Heart left ventricle (tissue), 16 donors: ENCODE measurements at regions of chr15 and their contacts with region 1.

Region 1: DNA sequence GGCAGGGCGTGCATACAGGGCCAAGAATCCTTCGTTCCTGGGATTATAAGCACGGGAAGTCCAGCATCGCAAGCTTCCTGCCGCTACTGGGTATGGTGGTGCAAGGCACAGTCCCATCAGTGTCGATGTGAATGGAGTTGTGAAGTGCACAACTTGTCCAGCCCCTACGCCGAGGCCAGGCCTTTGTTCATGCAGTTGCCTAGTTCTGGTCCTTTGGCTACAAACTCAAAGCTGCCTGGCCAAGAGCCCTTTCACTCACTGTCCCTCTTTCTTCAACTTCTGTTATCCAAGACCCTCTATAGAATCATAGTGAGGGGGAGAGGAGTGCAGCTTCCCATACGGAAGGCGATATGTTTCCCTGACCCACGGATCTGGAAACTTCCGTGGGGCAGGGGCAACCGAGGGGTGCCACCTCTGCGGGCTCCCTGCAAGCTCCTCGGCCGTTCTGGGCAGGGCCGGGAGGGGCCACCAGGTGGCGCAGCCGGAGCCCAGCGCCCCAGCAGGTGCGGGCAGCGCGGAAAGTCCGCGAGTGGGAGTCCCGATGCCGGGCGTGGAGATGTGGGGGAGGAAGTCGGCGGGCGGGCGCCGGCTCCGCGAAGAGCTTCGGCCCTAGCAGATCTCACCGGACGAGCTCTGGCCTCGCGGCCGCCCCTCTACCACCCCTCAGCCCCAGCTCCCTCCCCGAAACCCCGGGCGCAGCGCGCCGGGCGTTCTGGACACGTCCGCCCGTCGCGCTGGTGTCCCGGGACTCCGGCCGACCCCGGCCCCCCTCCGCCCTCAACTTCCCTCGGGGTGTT is 693 bp downstream of the RASGRP1 start:
- DNase-seq: peak; percentile 49 to 86 (median 67)
- ATAC-seq: peak in 3 of 4 donors; percentile 85 to 95 (median 89)
- H3K4me3 ChIP-seq: peak overlapping the region; percentile 37 to 70 (median 56)
- H3K27ac ChIP-seq: peak overlapping the region in 3 of 12 donors; percentile 25 to 83 (median 26)
- H3K4me1 ChIP-seq: peaks cover 0 to 20% (median 5%) of the 10 kb centered on the region in 12 donors
- H3K27me3 ChIP-seq: peaks cover 0 to 25% (median 5%) of the 10 kb centered on the region in 9 donors
- CTCF ChIP-seq: peak; percentile 80 to 91 (median 86)
- POLR2A ChIP-seq: no peak

Region 2: GRCh38 chr15:38474155-38474757 is 89.7 kb before region 1 on chr15:
- intact Hi-C with region 1: loop called in 2 of 10 experiments (anchors 5 to 10 kb)
- DNase-seq: no peak
- ATAC-seq: peak; percentile 61 to 96 (median 88)
- H3K4me3 ChIP-seq: no peak overlapping the region
- H3K27ac ChIP-seq: no peak overlapping the region
- H3K4me1 ChIP-seq: peaks cover 0 to 4% (median 0%) of the 10 kb centered on the region in 12 donors
- H3K27me3 ChIP-seq: no peaks in the 10 kb centered on the region
- CTCF ChIP-seq: peak; percentile 30 to 70 (median 60)
- POLR2A ChIP-seq: no peak

Region 3: DNA sequence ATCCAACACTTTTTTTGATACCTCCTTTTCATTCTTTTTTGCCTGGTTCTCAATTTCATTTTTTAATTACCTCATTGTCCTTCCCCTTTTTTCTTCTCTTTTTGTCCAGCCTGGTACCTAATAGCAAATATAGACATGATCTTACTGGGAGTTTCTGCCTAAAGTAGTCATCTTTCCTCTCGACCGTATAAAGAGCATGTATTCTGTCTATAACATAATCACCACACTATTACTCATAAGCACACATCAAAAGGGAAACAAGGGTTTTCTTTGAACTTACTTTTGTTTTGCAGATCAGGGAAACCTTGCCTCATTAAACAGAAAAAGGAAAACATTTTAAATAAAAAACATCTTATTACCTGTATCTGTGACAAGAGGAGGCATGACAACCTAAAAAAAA is 77.0 kb before region 1 on chr15:
- intact Hi-C with region 1: loop called in 1 of 10 experiments (anchors 10 kb)
- DNase-seq: no peak
- ATAC-seq: no peak
- H3K4me3 ChIP-seq: no peak overlapping the region
- H3K27ac ChIP-seq: no peak overlapping the region
- H3K4me1 ChIP-seq: peaks cover 0 to 3% (median 0%) of the 10 kb centered on the region in 12 donors
- H3K27me3 ChIP-seq: no peaks in the 10 kb centered on the region
- CTCF ChIP-seq: no peak
- POLR2A ChIP-seq: no peak

Region 4: DNA sequence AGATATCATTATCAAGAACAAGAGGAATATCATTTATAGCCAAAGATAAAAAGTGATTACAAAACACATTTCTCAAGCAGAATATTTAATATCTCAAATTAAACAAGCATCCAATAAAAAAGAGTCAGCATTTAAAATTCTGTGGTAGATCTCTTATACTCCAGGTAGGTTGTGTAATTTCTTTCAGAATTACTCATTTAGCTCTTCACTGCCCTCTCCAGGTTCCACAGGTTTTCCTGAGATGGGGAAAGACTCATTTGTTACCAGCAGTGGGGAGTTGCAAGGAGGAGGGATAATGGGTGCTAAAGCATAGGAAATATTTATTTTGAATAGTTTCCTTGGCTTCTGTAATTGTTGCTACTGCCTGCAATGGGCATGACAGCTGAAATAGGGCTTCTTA is 83.8 kb after region 1 on chr15:
- intact Hi-C with region 1: loop called in 1 of 10 experiments (anchors 10 kb)
- DNase-seq: no peak
- ATAC-seq: peak in 1 of 4 donors; percentile 47
- H3K4me3 ChIP-seq: no peak overlapping the region
- H3K27ac ChIP-seq: no peak overlapping the region
- H3K4me1 ChIP-seq: peaks cover 0 to 19% (median 0%) of the 10 kb centered on the region in 12 donors
- H3K27me3 ChIP-seq: peaks cover 0 to 4% (median 0%) of the 10 kb centered on the region in 9 donors
- CTCF ChIP-seq: peak in 9 of 12 donors; percentile 7 to 39 (median 26)
- POLR2A ChIP-seq: no peak

Region 5: DNA sequence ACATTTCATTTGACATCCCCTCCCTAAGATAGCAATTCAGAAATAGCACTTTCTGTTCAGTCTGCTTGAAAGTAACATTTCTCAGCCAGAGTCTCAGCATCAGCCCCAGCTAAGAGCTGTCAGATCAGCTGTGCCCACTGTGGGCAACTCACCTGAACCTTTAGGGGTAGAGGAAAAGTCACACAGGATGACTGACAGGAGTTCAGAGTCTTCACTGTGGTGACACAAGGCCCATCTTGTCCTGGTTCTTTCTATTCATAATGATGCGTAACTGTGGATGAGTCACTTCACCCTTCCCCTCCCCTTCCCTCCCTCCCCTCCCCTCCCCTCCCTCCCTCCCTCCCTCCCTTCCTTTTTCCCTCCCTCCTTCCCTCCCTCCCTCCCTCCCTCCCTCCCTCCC is 96.8 kb after region 1 on chr15:
- intact Hi-C with region 1: no loop called
- DNase-seq: no peak
- ATAC-seq: no peak
- H3K4me3 ChIP-seq: no peak overlapping the region
- H3K27ac ChIP-seq: no peak overlapping the region
- H3K4me1 ChIP-seq: peaks cover 0 to 4% (median 0%) of the 10 kb centered on the region in 12 donors
- H3K27me3 ChIP-seq: peaks cover 0 to 7% (median 0%) of the 10 kb centered on the region in 9 donors
- CTCF ChIP-seq: no peak
- POLR2A ChIP-seq: no peak

Region 6: DNA sequence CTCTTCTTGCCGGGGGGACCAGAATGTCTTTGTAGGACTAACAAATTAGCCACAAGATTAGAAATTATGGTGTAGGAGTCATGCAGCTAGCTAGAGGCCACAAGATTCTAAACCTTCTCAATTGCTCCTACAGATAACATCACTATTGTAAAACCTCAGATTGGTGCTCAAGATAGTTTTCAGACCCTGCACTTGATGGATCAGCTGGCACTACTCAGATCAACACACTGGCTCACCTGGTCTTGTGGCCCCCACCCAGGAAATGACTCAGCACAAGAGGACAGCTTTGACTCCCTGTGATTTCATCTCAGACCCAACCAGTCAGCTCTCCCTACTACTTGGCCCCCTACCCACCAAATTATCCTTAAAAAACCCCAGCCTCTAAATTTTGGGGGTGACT is 124.8 kb after region 1 on chr15:
- intact Hi-C with region 1: loop called (anchors 1 to 5 kb)
- DNase-seq: no peak
- ATAC-seq: no peak
- H3K4me3 ChIP-seq: no peak overlapping the region
- H3K27ac ChIP-seq: peak overlapping the region in 1 of 12 donors; percentile 54
- H3K4me1 ChIP-seq: peaks cover 0 to 40% (median 0%) of the 10 kb centered on the region in 12 donors
- H3K27me3 ChIP-seq: no peaks in the 10 kb centered on the region
- CTCF ChIP-seq: no peak
- POLR2A ChIP-seq: no peak